HCT116 (cell line): ENCODE measurements at regions of chr2 and their contacts with region 1.

Region 1: GRCh38 chr2:155842103-155842502 is 490.4 kb downstream of the NR4A2 start:
- DNase-seq: no peak
- ATAC-seq: no peak
- H3K4me3 ChIP-seq: no peak overlapping the region
- H3K27ac ChIP-seq: no peak overlapping the region
- H3K4me1 ChIP-seq: no peaks in the 10 kb centered on the region
- H3K27me3 ChIP-seq: no peaks in the 10 kb centered on the region
- CTCF ChIP-seq: no peak
- POLR2A ChIP-seq: no peak
- RAD21 ChIP-seq: no peak

Region 2: DNA sequence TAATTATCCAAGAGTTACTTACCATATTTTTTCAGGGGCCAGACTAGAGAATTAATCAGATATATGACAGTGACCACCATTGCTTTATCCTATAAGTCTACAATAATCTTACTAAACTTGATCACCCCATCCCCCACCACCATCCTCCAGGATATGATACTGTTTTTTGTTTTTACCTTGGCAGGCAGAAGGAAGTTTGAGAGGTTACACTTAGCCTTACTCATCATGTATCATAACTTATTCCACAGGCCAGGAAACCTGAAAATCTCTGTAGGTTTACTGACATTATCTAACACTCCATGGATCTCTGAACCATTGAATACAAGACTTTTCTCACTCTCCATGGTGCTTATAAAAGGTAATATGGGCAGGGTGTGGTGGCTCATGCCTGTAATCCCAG is 540.9 kb before region 1 on chr2:
- CTCF ChIA-PET with region 1: no interaction called
- POLR2A ChIA-PET with region 1: no interaction called
- RAD21 ChIA-PET with region 1: no interaction called
- intact Hi-C with region 1: no loop called
- DNase-seq: no peak
- ATAC-seq: no peak
- H3K4me3 ChIP-seq: no peak overlapping the region
- H3K27ac ChIP-seq: no peak overlapping the region
- H3K4me1 ChIP-seq: no peaks in the 10 kb centered on the region
- H3K27me3 ChIP-seq: no peaks in the 10 kb centered on the region
- CTCF ChIP-seq: no peak
- POLR2A ChIP-seq: no peak
- RAD21 ChIP-seq: no peak

Region 3: DNA sequence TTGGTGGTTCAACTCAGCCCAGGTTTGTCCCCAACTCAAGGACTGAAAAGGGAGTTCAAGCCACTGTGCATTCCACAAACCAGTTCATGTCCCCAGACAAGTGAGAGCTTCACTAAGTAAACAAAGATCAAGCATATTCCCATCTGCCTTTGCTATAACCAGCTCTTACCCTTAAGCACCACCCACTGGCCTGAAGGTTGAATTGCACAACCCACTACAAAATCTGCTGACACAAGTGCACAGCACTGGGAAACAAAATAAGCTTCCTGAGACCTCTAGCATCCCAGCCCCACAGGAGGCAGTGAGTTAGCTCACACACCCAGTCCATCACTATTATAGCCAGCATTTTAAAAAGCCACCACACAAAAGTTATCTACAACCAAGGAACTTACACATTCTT is 26.2 kb before region 1 on chr2:
- CTCF ChIA-PET with region 1: no interaction called
- POLR2A ChIA-PET with region 1: no interaction called
- RAD21 ChIA-PET with region 1: no interaction called
- intact Hi-C with region 1: loop called (anchors 1 kb)
- DNase-seq: peak; percentile 23
- ATAC-seq: peak; percentile 95
- H3K4me3 ChIP-seq: no peak overlapping the region
- H3K27ac ChIP-seq: no peak overlapping the region
- H3K4me1 ChIP-seq: no peaks in the 10 kb centered on the region
- H3K27me3 ChIP-seq: no peaks in the 10 kb centered on the region
- CTCF ChIP-seq: peak; percentile 26 to 61 (median 61); a peak in 5 of 6 replicates
- POLR2A ChIP-seq: no peak
- RAD21 ChIP-seq: peak; percentile 72